ENCODE measurements at regions of chr21 and their contacts with region 1.

Region 1: DNA sequence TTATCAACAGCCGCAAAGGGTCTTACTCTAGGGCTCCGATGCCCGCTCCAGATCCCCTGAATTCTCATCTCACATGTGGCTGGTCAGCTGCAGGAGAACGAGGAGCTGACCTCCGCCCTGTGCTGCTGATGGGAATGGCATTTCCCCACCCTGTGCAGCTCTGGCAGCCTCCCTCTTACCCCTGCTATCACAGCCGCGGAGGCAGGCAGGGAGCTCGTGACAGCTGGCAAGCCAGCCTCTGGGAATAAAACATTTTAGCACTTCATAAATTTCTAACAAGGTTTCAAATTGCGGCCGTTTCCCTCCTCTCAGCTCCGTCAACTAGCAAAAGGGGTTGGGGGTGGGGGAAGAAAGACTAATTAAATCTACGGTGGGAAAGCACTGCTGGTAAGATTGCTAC is 81.1 kb downstream of the DSCAM start:
- DNase-seq: no peak
- H3K4me3 ChIP-seq: no peak overlapping the region
- H3K27ac ChIP-seq: no peak overlapping the region
- H3K4me1 ChIP-seq: no peaks in the 10 kb centered on the region
- H3K27me3 ChIP-seq: no peaks in the 10 kb centered on the region
- CTCF ChIP-seq: no peak
- POLR2A ChIP-seq: no peak

Region 2: DNA sequence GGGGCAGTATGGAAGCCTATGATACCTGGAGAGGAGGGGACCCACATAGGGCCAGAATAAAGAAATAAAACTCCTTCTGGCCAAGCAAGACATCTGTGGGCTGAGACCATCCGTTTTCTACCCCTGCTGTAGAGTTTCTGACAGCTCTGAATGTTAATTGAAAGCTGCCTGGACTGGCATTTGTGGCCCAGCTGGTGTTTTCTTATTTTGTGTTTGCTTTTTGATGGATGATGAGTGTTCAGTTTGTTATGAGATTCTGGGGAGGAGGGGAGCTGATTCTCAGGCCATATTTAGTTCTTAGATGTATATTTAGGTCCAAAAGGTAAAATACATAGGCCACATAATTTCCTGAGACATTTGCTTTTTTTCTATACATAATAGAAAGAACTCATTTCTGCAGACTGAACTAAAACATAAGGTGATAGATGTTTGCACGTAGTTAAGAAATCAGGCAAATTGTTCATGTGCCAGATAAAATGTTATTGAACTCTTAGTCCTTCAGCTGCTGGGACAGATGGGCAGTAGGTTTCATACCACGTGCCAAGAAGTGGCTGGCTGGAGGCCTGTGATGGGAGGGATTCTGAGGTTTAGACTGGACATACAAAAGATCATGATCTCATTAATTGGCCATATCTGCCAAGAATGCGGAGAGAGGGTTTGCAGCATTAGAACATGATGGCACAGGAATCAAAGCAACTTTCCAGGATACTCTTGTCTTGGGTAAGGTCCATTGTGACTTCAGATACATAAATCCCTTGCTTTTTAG is 27.1 kb after region 1 on chr21:
- intact Hi-C with region 1: loop called (anchors 2 kb)
- DNase-seq: no peak
- H3K4me3 ChIP-seq: no peak overlapping the region
- H3K27ac ChIP-seq: no peak overlapping the region
- H3K4me1 ChIP-seq: no peaks in the 10 kb centered on the region
- H3K27me3 ChIP-seq: no peaks in the 10 kb centered on the region
- CTCF ChIP-seq: no peak
- POLR2A ChIP-seq: no peak